Mammary epithelial cell (primary cell): ENCODE measurements at regions of chr14 and their contacts with region 1.

Region 1: DNA sequence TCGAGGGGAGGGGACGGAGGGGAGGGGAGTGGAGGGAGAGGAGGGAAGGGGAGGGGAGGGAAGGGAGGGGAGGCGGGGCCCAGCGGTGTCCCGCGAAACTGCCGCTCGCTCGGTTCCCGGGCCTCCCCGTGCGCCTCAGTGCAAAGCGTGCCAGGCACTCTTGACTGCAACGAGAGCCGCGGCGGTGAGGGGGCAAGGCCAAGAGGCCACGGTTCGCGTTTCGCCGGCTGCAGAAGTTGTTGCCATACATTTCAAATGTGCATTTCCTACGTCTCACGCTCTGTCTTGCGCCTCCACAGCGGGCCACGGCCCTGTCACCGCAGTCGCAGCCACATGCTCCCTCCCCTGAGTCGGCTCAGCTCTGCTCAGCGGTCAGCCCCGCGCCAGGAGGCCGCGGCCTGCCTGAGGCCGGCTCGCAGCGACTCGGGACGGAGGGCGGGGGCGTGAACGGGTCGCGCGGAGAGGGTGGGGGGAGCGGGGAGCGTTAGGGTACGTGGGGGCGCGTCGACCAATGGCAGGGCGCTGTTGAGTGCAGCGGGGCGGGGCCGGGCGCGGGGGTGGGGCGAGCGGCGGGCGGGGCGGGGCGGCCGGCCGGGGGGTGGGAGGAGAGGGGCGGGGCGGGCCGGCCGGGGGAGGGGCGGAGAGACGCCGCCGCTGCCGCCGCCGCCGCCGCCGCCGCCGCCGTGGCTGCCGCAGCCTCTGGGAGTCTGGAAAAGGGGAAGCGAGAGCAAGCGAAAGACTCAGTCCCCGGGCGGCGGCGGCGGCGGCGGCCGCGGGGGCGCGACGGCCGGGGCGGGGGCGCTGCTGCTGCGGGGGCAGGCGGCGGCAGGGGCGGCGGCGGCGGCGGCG is at the start of gene PPP2R5C:
- DNase-seq: peak; percentile 79
- H3K4me3 ChIP-seq: peak within 1 kb of the TSS; percentile 68 to 96 (median 95)
- H3K27ac ChIP-seq: peak within 1 kb of the TSS; percentile 34
- H3K4me1 ChIP-seq: peaks cover 14% of the 10 kb centered on the region
- H3K27me3 ChIP-seq: no peaks in the 10 kb centered on the region
- CTCF ChIP-seq: no peak
- total RNA-seq, gene PPP2R5C: 85.0 to 110 TPM

Region 2: DNA sequence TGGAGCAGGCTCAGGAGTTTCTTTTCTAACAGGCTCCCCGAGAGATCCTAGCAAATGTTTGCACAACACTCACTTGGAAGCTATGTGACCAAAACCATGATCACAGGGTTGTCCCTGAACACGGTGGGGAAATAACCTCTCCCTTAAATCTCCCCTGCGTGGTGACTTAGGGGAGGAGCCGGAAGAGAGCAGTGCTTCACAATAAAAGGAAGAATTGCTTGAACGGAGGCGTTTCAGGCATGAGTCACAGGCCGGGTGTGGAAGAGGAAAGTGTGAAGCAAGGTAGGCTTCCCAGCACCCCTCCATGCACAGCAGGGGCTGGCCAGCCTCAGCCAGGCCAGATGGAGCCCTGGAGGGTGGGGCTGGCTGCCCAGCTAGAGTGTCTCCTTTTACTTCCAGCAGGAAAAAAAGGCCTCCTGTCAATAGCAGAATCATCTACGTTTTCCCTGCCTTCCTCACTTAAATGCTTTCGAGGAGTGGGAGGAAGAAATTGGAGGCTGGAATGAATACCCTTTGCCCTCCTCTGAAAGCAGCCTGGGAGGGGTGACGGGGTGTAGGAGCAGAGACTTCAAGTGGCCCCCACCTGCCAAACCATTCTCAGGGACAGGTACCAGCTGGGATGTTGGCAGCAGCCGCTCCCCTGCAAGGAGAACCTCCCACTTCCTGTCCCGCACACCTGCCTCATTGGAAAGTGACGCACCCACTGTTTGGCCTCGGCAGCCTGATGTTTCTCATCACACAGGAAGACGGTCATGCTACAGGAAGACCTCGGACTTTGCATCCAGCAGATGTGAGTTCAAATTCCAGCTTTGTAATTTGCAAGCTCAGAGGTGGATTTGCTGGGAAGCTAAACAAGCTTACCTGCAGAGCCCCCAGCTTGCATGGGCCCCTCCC is 29.8 kb before region 1 on chr14:
- CTCF ChIA-PET with region 1: interaction called, 4 read pairs
- dilution Hi-C with region 1: no loop called
- in situ Hi-C with region 1: no loop called
- intact Hi-C with region 1: loop called (anchors 1 kb)
- DNase-seq: peak; percentile 95
- H3K4me3 ChIP-seq: peak overlapping the region in 1 of 3 experiments; percentile 18
- H3K27ac ChIP-seq: peak overlapping the region; percentile 91
- H3K4me1 ChIP-seq: peaks cover 37% of the 10 kb centered on the region
- H3K27me3 ChIP-seq: no peaks in the 10 kb centered on the region
- CTCF ChIP-seq: peak in 1 of 2 donors; percentile 6

Region 3: GRCh38 chr14:101947906-101948665 is 186.8 kb after region 1 on chr14:
- CTCF ChIA-PET with region 1: no interaction called
- dilution Hi-C with region 1: no loop called
- in situ Hi-C with region 1: no loop called
- intact Hi-C with region 1: loop called (anchors 1 kb)
- DNase-seq: peak; percentile 100
- H3K4me3 ChIP-seq: peak overlapping the region; percentile 72 to 92 (median 83)
- H3K27ac ChIP-seq: peak overlapping the region; percentile 95
- H3K4me1 ChIP-seq: peaks cover 15% of the 10 kb centered on the region
- H3K27me3 ChIP-seq: no peaks in the 10 kb centered on the region
- CTCF ChIP-seq: no peak